ENCODE measurements at regions of chr3 and their contacts with region 1.

Region 1: GRCh38 chr3:3200632-3201212 is 21.2 kb upstream of the CRBN start:
- DNase-seq: no peak
- ATAC-seq: no peak

Region 2: DNA sequence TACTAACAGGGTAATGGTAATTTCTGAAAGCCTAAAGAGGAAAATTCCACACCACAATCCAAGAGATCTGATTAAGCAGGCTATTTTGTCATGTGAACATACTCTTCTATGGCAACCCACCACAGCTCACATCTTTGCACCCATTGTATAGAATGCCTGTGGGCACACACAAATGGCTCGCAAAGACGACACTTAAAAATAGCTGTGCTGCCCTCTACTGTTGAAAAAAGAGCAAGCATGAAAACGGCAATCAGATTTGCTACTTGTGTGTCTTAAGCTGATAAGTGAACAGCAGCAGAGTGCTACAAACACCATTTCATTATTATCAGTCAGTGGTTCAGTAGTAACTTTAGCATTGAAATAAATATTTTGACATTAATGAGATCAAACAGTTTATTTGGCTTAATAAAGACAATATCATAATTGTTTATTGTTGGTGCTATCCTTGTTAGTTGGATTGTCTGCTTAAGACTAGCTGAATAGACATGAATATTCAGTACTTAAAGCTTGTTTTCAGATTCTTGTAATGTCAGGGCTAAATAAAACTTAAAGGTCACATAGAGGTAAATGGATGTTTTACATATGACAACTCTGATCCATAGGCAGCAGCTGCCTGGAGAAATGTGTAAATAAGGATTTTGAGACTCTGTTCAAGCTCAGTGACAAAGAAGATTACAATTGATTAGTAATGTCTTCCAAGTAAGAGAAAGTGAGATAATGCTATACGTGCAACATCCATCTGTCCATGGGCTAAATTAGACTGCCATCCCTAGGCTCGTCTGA is 797.6 kb after region 1 on chr3:
- intact Hi-C with region 1: loop called (anchors 2 kb)
- DNase-seq: no peak
- ATAC-seq: no peak

Region 3: GRCh38 chr3:4290272-4290893 is 1089.7 kb after region 1 on chr3:
- intact Hi-C with region 1: loop called (anchors 1 kb)
- DNase-seq: no peak
- ATAC-seq: no peak

Measured in Right ventricle myocardium inferior (tissue), 1 donor.